ENCODE measurements at regions of chr11 and their contacts with region 1.

Region 1: GRCh38 chr11:48116437-48117228 is 100.0 kb upstream of the OR4B1 start:
- DNase-seq: peak; percentile 28 to 53 (median 35)
- ATAC-seq: peak; percentile 83
- H3K4me3 ChIP-seq: no peak overlapping the region
- H3K27ac ChIP-seq: no peak overlapping the region
- H3K4me1 ChIP-seq: no peaks in the 10 kb centered on the region
- H3K27me3 ChIP-seq: no peaks in the 10 kb centered on the region
- CTCF ChIP-seq: peak; percentile 26 to 35 (median 30); a peak in 3 of 6 replicates
- EP300 ChIP-seq: no peak
- POLR2A ChIP-seq: no peak
- RAD21 ChIP-seq: no peak

Region 2: DNA sequence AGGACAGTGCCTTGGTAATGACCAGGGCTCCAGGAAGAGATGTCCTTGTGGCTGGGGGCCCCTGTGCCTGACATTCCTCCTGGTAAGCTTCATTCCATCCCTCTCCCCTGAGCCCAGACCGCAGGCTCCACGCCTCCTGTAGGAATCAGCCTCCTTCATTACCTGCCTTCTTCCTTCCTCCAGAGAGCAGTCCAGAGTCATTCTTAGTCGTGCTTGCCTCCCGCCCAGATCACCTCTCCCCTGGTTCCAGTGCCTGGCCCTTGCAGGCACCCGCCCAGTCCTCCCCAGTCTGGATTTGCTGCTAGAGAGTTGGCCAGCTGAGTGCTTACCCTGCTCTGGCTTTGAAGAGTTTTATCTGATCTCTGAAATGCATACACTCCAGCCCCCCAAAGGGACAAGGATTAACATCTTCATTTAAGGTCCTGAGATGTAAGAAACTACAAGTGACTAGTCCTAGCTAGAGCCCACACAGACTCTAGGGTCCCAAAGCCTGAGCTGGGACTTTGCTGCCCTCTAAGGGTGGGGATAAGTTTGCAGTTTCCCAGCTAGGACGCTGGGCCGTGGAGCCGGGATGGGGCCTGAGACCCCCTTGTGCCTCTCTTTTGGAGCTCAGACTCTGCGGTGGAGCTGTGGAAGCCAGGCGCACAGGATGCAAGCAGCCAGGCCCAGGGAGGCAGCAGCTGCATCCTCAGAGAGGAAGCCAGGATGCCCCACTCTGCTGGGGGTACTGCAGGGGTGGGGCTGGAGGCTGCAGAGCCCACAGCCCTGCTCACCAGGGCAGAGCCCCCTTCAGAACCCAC is 857.3 kb before region 1 on chr11:
- CTCF ChIA-PET with region 1: no interaction called
- POLR2A ChIA-PET with region 1: no interaction called
- in situ Hi-C with region 1: no loop called
- intact Hi-C with region 1: no loop called
- DNase-seq: peak in 2 of 4 experiments; percentile 67 to 68
- ATAC-seq: peak; percentile 82
- H3K4me3 ChIP-seq: no peak overlapping the region
- H3K27ac ChIP-seq: no peak overlapping the region
- H3K4me1 ChIP-seq: peaks cover 45 to 46% of the 10 kb centered on the region in 2 experiments
- H3K27me3 ChIP-seq: no peaks in the 10 kb centered on the region
- CTCF ChIP-seq: peak; percentile 74 to 83 (median 81)
- EP300 ChIP-seq: no peak
- POLR2A ChIP-seq: no peak
- RAD21 ChIP-seq: peak; percentile 28 to 65; a peak in 3 of 4 replicates

Region 3: GRCh38 chr11:47863189-47863892 is 253.3 kb before region 1 on chr11:
- CTCF ChIA-PET with region 1: no interaction called
- POLR2A ChIA-PET with region 1: no interaction called
- in situ Hi-C with region 1: no loop called
- intact Hi-C with region 1: loop called (anchors 10 kb)
- DNase-seq: peak in 1 of 4 experiments; percentile 22
- ATAC-seq: peak; percentile 64
- H3K4me3 ChIP-seq: no peak overlapping the region
- H3K27ac ChIP-seq: peak overlapping the region; percentile 40; the same call in 1 of the 3 replicates
- H3K4me1 ChIP-seq: peaks cover 0 to 22% of the 10 kb centered on the region in 2 experiments; a peak in 3 of 5 replicates
- H3K27me3 ChIP-seq: no peaks in the 10 kb centered on the region
- CTCF ChIP-seq: no peak
- EP300 ChIP-seq: peak; percentile 53; the same call in 1 of the 2 replicates
- POLR2A ChIP-seq: no peak
- RAD21 ChIP-seq: no peak

Region 4: DNA sequence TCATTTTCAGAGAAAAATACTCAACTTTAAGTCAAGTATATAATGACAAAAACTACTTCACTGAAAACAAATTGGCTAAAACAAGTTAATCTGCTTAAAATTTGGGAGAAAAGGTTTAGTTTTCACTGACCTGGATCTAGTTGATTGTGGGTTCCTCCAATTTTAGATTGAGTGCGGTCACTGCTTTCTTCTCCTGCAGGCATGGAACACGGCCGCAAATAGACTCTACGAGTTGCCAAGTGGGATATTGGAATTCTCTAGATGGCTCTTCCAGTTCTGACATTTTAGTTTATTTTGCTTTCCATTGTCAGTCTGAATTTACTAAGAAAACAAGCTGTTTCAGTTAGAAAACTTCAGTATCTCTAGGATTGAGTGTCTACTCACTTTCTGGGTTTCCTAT is 237.4 kb after region 1 on chr11:
- CTCF ChIA-PET with region 1: no interaction called
- POLR2A ChIA-PET with region 1: no interaction called
- in situ Hi-C with region 1: no loop called
- intact Hi-C with region 1: no loop called
- DNase-seq: no peak
- ATAC-seq: no peak
- H3K4me3 ChIP-seq: no peak overlapping the region
- H3K27ac ChIP-seq: no peak overlapping the region
- H3K4me1 ChIP-seq: no peaks in the 10 kb centered on the region
- H3K27me3 ChIP-seq: no peaks in the 10 kb centered on the region
- CTCF ChIP-seq: no peak
- EP300 ChIP-seq: no peak
- POLR2A ChIP-seq: no peak
- RAD21 ChIP-seq: no peak

Measured in K562 (cell line).